Calu3 (cell line): ENCODE measurements at regions of chr5 and their contacts with region 1.

Region 1: DNA sequence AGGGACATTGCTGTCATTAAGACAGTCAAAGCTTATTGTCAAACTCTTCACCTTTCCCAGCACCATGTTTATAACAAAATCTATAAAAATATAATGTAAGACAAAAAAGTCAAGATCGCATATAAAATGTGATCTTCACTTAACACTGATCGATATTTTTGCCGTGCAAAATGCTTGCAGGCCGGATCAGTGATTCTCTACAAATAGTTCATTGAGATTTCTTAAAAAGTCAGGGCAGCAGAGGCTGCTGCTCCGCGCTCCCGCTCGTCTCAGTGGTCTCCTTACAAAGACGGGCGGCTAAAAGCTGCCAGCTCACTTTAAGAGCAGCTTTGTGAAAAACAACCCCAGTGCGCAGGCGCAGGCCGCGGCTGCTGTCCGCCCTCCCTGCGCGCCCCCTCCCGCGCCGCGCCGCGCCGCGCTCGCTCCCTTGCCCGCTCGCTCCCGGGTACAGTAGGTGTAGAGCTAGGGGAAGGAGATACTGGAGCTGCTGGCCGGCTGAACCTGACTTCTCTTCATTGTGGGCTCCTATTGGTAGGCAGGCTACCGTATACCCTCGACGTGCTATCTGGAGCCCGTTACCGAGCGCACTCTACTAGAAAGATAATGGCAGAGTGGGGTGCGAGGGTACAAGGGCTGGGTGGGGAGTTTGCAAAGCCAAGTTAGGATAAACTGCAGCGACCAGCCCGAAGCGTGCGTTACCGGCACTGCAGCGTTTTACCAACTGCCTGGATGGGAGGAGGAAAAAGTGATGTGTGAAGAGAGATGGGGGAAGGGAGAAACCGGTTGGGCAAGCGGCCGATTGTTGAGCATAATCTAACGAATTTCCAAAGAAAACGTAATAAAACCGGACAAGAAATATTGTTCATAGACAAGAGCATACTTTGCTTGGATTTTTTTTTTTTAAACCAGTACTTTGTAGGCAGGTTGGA is at the start of gene ARRDC3:
- DNase-seq: peak; percentile 98
- H3K4me3 Mint-ChIP-seq: peak within 1 kb of the TSS; percentile 86
- H3K27ac Mint-ChIP-seq: peak within 1 kb of the TSS; percentile 98
- H3K4me1 Mint-ChIP-seq: peaks cover 14% of the 10 kb centered on the region
- H3K27me3 Mint-ChIP-seq: no peaks in the 10 kb centered on the region
- CTCF ChIP-seq: no peak
- total RNA-seq, gene ARRDC3: 32.9 and 33.4 TPM in 2 replicates

Region 2: DNA sequence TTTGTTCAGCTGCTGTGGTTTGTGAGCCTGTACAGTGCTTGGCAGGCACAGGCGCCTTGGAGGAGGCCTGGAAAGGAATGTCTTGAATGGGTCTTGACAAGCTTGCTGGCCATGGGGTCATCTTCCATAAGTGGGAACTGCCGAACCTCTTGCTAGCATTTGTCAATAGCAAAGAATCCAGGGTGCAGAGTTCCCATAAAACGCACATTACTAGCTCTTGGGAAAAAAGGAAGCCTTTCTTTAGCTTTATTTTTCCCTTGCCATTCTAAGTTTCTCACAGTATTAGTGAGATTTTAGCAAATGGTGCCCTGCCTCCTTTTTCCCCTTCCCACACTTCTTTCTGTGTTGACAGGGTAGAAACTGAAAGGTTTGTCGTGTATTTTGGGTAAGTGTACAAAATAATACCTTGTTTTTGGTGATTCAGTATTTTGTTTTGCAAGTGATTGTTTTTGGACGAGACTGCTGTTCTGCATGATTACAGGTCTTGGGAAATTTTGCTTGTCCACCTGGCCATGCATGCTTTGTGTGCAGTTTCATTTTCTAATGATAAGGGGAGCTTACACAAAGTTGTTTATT is 742.7 kb before region 1 on chr5:
- CTCF ChIA-PET with region 1: no interaction called
- intact Hi-C with region 1: no loop called
- DNase-seq: no peak
- H3K4me3 Mint-ChIP-seq: no peak overlapping the region
- H3K27ac Mint-ChIP-seq: no peak overlapping the region
- H3K4me1 Mint-ChIP-seq: peaks cover 7% of the 10 kb centered on the region
- H3K27me3 Mint-ChIP-seq: no peaks in the 10 kb centered on the region
- CTCF ChIP-seq: no peak

Region 3: DNA sequence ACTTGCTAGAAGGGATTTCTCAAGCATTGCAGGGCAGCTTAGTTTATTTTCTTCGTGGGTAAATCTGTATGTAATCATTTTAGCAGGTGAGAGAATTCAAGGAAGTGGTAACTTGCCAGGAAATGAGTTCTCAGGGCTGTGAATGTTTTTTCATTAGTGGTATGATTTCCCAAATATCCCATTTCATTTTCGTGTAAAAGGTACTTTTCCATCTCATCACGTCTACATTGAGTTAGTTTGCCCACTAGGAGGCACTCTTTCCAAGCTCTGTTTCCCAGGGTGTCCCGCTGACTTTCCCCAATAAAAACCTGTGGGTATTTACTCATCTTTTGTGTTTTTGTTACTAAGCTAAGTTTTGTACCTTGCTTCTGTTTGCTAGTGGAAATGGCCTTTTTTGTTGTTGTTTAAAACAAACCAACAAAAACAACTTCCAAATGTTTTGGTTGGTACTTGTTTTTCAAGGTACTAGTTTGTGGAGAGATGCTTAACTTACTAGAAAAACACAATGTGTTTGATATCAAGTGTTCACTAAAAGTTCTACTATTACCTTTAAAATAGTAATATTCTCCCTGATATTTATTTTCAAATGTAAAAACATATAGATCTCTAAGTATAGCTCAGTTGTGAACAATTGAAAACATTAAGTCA is 451.1 kb before region 1 on chr5:
- CTCF ChIA-PET with region 1: interaction called, 17 read pairs
- intact Hi-C with region 1: loop called (anchors 1 kb)
- DNase-seq: peak; percentile 72
- H3K4me3 Mint-ChIP-seq: no peak overlapping the region
- H3K27ac Mint-ChIP-seq: no peak overlapping the region
- H3K4me1 Mint-ChIP-seq: peaks cover 22% of the 10 kb centered on the region
- H3K27me3 Mint-ChIP-seq: no peaks in the 10 kb centered on the region
- CTCF ChIP-seq: peak; percentile 76

Region 4: DNA sequence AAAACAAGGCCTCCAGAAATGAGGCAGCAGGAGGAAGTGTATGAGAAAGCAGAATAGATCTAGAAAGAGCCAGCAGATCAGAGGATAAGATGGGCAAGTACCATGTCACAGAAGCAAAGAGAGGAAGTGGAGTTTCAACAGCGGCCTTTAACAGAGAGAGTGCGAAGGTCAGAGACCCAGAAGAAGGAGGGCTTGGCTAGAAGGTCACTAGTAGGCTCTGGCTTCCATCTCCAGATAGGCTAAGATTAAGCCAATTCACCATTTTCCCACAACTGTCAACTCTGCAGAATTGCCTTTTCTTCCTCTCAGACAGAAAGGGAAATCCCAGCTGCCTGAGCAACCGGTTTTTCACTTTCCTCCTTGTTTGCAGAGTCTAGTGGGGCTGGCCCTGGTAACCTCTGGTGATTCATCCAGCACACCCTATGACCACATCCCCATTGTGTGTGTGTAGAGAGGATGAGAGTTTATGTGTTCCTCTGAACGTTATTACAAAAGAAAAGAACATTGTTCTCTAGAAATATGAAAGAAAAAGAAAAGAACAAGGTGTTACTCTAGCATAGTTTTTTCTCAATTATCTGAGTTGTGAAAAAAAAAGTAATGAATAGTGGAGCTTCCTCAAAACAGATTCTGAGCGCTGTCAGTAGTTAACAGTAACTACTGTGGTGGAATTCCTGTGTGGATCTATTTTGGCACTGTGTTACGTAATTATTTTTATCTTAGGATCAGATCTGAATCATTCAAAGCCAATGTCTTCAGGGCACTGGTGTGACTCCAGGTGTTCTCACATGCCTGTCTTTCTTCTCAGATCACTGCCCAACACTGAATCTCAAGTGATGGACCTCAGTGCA is 220.5 kb before region 1 on chr5:
- CTCF ChIA-PET with region 1: interaction called, 5 read pairs
- intact Hi-C with region 1: loop called (anchors 5 kb)
- DNase-seq: peak; percentile 94
- H3K4me3 Mint-ChIP-seq: peak overlapping the region; percentile 2
- H3K27ac Mint-ChIP-seq: peak overlapping the region; percentile 53
- H3K4me1 Mint-ChIP-seq: peaks cover 55% of the 10 kb centered on the region
- H3K27me3 Mint-ChIP-seq: no peaks in the 10 kb centered on the region
- CTCF ChIP-seq: no peak

Region 5: GRCh38 chr5:91225848-91226686 is 157.2 kb before region 1 on chr5:
- CTCF ChIA-PET with region 1: interaction called, 35 read pairs
- intact Hi-C with region 1: loop called (anchors 1 kb)
- DNase-seq: peak; percentile 74
- H3K4me3 Mint-ChIP-seq: no peak overlapping the region
- H3K27ac Mint-ChIP-seq: no peak overlapping the region
- H3K4me1 Mint-ChIP-seq: peaks cover 33% of the 10 kb centered on the region
- H3K27me3 Mint-ChIP-seq: no peaks in the 10 kb centered on the region
- CTCF ChIP-seq: peak; percentile 52

Region 6: DNA sequence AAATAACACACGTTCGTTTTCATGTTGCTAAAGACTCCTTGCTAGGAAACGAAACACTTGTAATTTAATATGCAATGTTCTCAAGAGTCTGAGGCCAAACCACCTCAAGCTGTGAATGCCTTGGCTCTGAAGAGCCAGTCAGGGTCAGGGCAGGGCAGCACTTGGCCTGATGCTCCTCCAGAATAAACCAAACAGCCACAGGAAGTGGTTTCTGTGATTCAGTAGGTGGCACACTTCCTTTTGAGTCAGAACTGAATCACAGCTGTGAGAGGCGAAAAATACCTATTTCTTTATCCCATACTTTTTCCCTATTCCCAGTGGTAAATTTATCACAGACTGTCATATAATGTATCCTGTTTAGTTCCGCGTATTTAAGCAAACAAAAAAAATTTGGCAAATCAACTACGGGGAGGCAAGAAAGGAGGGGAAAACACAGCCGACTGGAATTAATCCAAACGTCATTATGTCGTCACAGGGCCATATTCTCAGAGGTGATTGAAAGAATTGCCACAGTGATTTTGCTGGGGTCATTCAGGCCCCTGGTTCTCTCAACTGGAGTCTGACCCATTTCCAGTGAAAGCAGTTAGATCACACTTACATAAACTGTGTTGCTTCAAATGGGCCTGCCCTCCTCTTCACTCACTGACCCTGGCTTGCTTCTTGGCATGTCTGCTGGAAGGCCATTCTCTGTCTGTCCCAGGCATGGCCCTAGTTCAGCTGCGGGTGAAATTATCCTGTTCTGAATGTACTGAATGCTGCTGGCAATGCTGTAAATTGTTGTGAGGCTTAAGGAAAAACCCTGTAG is 71.4 kb before region 1 on chr5:
- CTCF ChIA-PET with region 1: interaction called, 7 read pairs
- intact Hi-C with region 1: loop called (anchors 2 kb)
- DNase-seq: peak; percentile 76
- H3K4me3 Mint-ChIP-seq: peak overlapping the region; percentile 15
- H3K27ac Mint-ChIP-seq: peak overlapping the region; percentile 11
- H3K4me1 Mint-ChIP-seq: peaks cover 44% of the 10 kb centered on the region
- H3K27me3 Mint-ChIP-seq: no peaks in the 10 kb centered on the region
- CTCF ChIP-seq: no peak

Region 7: DNA sequence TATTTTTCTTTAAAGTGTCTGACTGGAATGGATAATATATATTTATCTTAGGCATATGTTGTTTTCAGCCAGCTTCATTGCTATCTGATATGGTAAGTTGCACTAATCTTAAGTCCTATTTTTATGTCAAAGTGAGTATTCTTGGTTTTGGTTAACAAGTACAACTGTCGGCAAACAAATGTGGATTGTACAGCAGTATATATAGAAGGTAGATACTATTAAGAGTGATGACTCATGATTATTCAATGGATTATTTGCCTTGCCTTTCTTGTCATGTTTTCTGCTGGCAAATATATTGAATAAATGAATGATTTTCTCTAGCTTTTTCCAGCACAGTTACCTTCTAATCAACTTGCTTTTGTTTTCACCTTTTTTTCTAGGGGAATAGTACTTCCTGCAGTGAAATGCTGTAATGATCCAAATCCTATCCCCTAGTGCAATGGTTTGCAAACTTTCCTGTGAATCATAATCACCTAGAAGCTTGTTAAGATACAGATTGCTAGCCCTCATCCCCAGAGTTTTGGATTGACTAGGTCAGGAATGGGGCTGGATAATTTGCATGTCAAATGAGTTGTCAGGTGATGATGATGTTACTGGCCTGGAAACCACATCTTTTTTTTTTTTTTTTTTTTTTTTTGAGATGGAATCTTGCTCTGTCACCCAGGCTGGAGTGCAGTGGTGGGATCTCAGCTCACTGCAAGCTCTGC is 60.6 kb after region 1 on chr5:
- CTCF ChIA-PET with region 1: no interaction called
- intact Hi-C with region 1: no loop called
- DNase-seq: no peak
- H3K4me3 Mint-ChIP-seq: no peak overlapping the region
- H3K27ac Mint-ChIP-seq: no peak overlapping the region
- H3K4me1 Mint-ChIP-seq: peaks cover 5% of the 10 kb centered on the region
- H3K27me3 Mint-ChIP-seq: no peaks in the 10 kb centered on the region
- CTCF ChIP-seq: no peak